Caco-2 (cell line): ENCODE measurements at regions of chr6 and their contacts with region 1.

Region 1: GRCh38 chr6:154343473-154344308 is 12.9 kb downstream of the IPCEF1 start:
- DNase-seq: peak; percentile 69 to 70
- H3K4me3 ChIP-seq: no peak overlapping the region
- H3K4me3 Mint-ChIP-seq: peak overlapping the region; percentile 20
- H3K27ac Mint-ChIP-seq: no peak overlapping the region
- H3K4me1 ChIP-seq: peaks cover 6% of the 10 kb centered on the region; the same call in 1 of the 2 replicates
- H3K4me1 Mint-ChIP-seq: peaks cover 7% of the 10 kb centered on the region
- H3K27me3 ChIP-seq: no peaks in the 10 kb centered on the region
- H3K27me3 Mint-ChIP-seq: no peaks in the 10 kb centered on the region
- CTCF ChIP-seq: peak; percentile 22 to 41

Region 2: GRCh38 chr6:154156135-154156896 is 187.4 kb before region 1 on chr6:
- CTCF ChIA-PET with region 1: no interaction called
- POLR2A ChIA-PET with region 1: no interaction called
- intact Hi-C with region 1: loop called (anchors 1 kb)
- DNase-seq: peak; percentile 36 to 55
- H3K4me3 ChIP-seq: no peak overlapping the region
- H3K4me3 Mint-ChIP-seq: no peak overlapping the region
- H3K27ac Mint-ChIP-seq: no peak overlapping the region
- H3K4me1 ChIP-seq: no peaks in the 10 kb centered on the region
- H3K4me1 Mint-ChIP-seq: no peaks in the 10 kb centered on the region
- H3K27me3 ChIP-seq: no peaks in the 10 kb centered on the region
- H3K27me3 Mint-ChIP-seq: no peaks in the 10 kb centered on the region
- CTCF ChIP-seq: peak; percentile 41 to 65

Region 3: DNA sequence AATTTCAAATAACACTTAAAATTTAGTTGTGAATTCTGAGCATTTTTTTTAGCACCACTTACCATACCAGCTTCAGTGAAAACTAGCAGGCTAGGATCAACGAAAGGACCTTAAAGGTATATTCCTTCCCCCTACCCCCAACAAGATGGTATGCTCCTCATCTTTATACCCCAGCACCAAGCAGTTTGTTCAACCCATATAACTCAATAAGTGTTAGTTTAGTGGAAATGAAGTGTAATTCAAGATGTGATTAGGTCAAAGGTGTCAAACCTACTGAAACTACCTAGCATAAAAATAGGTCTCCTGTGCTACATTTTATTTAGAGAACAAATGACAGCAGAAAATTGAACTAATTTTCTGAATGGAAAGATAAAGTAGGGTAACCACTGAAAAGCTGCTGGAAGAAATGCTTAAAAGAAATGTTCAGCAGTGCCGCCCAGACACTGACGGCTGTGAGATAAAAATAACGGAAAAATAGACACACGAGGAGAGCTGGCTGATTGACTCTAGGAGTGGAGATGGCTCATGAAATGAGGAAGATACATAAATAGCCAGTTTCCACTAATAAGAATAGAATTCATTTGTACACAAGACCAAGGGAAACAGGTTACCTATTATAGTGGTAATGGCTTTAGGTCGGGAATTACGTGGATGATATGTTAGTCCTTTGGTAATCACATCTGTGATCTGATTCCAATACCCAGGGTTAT is 81.8 kb before region 1 on chr6:
- CTCF ChIA-PET with region 1: no interaction called
- POLR2A ChIA-PET with region 1: no interaction called
- intact Hi-C with region 1: no loop called
- DNase-seq: no peak
- H3K4me3 ChIP-seq: no peak overlapping the region
- H3K4me3 Mint-ChIP-seq: no peak overlapping the region
- H3K27ac Mint-ChIP-seq: no peak overlapping the region
- H3K4me1 ChIP-seq: no peaks in the 10 kb centered on the region
- H3K4me1 Mint-ChIP-seq: peaks cover 6% of the 10 kb centered on the region
- H3K27me3 ChIP-seq: no peaks in the 10 kb centered on the region
- H3K27me3 Mint-ChIP-seq: no peaks in the 10 kb centered on the region
- CTCF ChIP-seq: no peak

Region 4: DNA sequence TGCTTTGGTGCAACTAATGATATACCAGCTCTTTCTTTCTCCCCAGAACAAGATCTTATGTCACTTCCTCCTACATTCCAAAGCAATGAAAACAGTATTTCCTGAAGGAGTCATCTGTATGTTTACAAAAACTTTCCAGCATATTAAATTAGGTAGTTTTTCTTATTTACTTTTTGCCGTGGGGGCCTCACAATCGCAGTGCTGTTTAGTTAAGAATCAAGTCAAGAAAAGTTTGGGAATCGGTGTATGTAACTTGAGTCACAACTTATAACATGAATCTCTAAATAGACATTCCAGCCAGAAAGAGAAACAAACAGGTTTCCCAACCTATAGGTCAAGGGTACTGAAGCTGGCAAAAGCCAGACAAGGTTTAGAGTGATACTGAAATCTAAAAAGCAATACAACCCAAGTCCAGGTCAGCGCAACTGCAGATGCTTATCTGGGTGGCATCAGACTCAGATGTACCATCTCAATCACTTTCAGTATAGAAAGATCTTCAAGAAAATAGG is 50.7 kb before region 1 on chr6:
- CTCF ChIA-PET with region 1: no interaction called
- POLR2A ChIA-PET with region 1: no interaction called
- intact Hi-C with region 1: loop called (anchors 2 kb)
- DNase-seq: peak in 1 of 2 experiments; percentile 12
- H3K4me3 ChIP-seq: no peak overlapping the region
- H3K4me3 Mint-ChIP-seq: peak overlapping the region; percentile 26
- H3K27ac Mint-ChIP-seq: peak overlapping the region; percentile 32
- H3K4me1 ChIP-seq: peaks cover 24% of the 10 kb centered on the region
- H3K4me1 Mint-ChIP-seq: peaks cover 18% of the 10 kb centered on the region
- H3K27me3 ChIP-seq: no peaks in the 10 kb centered on the region
- H3K27me3 Mint-ChIP-seq: no peaks in the 10 kb centered on the region
- CTCF ChIP-seq: no peak

Region 5: GRCh38 chr6:154491567-154492443 is 148.1 kb after region 1 on chr6:
- CTCF ChIA-PET with region 1: no interaction called
- POLR2A ChIA-PET with region 1: no interaction called
- intact Hi-C with region 1: no loop called
- DNase-seq: no peak
- H3K4me3 ChIP-seq: no peak overlapping the region
- H3K4me3 Mint-ChIP-seq: no peak overlapping the region
- H3K27ac Mint-ChIP-seq: no peak overlapping the region
- H3K4me1 ChIP-seq: peaks cover 19% of the 10 kb centered on the region
- H3K4me1 Mint-ChIP-seq: no peaks in the 10 kb centered on the region
- H3K27me3 ChIP-seq: no peaks in the 10 kb centered on the region
- H3K27me3 Mint-ChIP-seq: no peaks in the 10 kb centered on the region
- CTCF ChIP-seq: no peak